Naive thymus-derived CD4-positive, alpha-beta T cell (primary cell): ENCODE measurements at regions of chr7 and their contacts with region 1.

Region 1: DNA sequence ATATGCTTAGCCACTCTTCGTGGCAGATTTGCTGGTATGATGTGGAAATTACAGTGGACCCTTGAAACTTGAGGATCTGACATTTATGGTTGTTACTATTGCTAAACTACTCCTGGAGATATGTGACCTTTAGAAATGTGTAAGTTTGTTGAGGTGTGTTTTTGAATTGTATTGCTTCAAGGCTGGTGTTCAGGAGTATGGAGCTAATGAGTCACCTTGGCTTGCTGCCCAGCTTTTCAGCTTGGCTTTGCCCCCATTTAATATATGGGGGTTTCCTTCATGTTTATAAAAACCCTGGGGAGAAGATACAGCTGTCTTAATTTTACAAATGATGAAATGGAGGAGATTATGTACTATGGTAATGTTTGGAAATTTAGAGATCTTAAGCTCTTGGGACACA is 11.6 kb downstream of the HBP1 start:
- DNase-seq: peak in 1 of 9 donors; percentile 64
- ATAC-seq: peak; percentile 43
- H3K4me3 ChIP-seq: no peak overlapping the region
- H3K4me3 Mint-ChIP-seq: peak overlapping the region in 4 of 10 donors; percentile 3 to 22 (median 7)
- H3K27ac ChIP-seq: no peak overlapping the region
- H3K27ac Mint-ChIP-seq: peak overlapping the region in 7 of 9 donors; percentile 1 to 42 (median 33)
- H3K4me1 ChIP-seq: peaks cover 3 to 6% of the 10 kb centered on the region in 2 donors
- H3K4me1 Mint-ChIP-seq: peaks cover 11 to 74% (median 60%) of the 10 kb centered on the region in 7 donors
- H3K27me3 ChIP-seq: no peaks in the 10 kb centered on the region
- H3K27me3 Mint-ChIP-seq: no peaks in the 10 kb centered on the region

Region 2: DNA sequence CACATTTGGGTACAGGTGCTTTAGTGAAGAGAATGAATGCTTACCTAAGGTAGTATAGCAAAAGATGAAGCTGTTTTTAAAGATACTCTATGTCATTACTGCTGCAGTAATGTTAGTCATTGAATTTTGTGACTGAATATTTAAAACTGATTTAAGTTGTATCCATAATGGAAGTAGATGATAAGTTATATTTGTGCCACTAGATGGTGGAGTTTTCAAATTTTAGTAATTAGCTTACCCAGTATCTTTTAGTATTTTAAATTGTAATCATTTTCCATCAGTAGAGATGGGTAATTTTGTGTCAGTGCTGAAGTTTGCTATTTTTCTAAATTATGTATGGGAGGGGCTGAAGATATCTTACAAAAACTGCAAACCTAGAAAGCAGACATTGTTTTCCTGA is 13.7 kb after region 1 on chr7:
- CTCF ChIA-PET with region 1: interaction called, 3 read pairs
- POLR2A ChIA-PET with region 1: interaction called, 5 read pairs
- intact Hi-C with region 1: loop called in 1 of 2 experiments (anchors 2 kb)
- DNase-seq: no peak
- ATAC-seq: no peak
- H3K4me3 ChIP-seq: no peak overlapping the region
- H3K4me3 Mint-ChIP-seq: no peak overlapping the region
- H3K27ac ChIP-seq: no peak overlapping the region
- H3K27ac Mint-ChIP-seq: peak overlapping the region in 1 of 9 donors; percentile 66
- H3K4me1 ChIP-seq: no peaks in the 10 kb centered on the region
- H3K4me1 Mint-ChIP-seq: peaks cover 0 to 16% (median 7%) of the 10 kb centered on the region in 7 donors
- H3K27me3 ChIP-seq: no peaks in the 10 kb centered on the region
- H3K27me3 Mint-ChIP-seq: no peaks in the 10 kb centered on the region